ENCODE measurements at regions of chr22 and their contacts with region 1.

Region 1: DNA sequence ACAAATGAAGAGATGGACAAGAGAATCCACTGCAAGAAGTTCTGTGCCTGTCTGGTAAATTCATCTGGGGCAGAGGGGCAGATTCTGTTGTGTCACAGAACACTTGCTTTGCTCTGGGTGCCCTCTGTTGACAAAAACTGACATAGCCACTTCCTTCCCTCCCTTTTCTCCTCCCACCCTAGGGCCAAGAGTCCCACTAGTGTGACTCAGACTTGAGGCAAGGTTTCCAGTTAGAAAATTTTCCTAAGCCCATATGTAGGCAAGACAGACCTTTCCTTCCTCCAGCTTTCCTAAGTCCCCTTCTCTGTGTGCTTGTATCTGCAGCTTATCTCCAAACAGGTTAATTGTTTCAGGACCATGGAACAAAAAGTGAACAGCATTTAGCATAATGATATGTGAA is 106.8 kb downstream of the RBFOX2 start:
- DNase-seq: peak in 4 of 10 donors; percentile 23 to 49 (median 40)
- H3K4me3 ChIP-seq: no peak overlapping the region
- H3K27ac ChIP-seq: peak overlapping the region in 7 of 59 donors; percentile 5 to 31 (median 19)
- H3K27me3 ChIP-seq: no peaks in the 10 kb centered on the region
- CTCF ChIP-seq: peak in 54 of 56 donors; percentile 32 to 80 (median 62)

Region 2: GRCh38 chr22:35430897-35431322 is 490.9 kb before region 1 on chr22:
- intact Hi-C with region 1: loop called in 1 of 2 experiments (anchors 10 kb)
- DNase-seq: peak; percentile 74 to 91 (median 82)
- H3K4me3 ChIP-seq: no peak overlapping the region
- H3K27ac ChIP-seq: peak overlapping the region in 21 of 59 donors; percentile 4 to 57 (median 33)
- H3K27me3 ChIP-seq: no peaks in the 10 kb centered on the region
- CTCF ChIP-seq: peak; percentile 80 to 98 (median 96)

Region 3: DNA sequence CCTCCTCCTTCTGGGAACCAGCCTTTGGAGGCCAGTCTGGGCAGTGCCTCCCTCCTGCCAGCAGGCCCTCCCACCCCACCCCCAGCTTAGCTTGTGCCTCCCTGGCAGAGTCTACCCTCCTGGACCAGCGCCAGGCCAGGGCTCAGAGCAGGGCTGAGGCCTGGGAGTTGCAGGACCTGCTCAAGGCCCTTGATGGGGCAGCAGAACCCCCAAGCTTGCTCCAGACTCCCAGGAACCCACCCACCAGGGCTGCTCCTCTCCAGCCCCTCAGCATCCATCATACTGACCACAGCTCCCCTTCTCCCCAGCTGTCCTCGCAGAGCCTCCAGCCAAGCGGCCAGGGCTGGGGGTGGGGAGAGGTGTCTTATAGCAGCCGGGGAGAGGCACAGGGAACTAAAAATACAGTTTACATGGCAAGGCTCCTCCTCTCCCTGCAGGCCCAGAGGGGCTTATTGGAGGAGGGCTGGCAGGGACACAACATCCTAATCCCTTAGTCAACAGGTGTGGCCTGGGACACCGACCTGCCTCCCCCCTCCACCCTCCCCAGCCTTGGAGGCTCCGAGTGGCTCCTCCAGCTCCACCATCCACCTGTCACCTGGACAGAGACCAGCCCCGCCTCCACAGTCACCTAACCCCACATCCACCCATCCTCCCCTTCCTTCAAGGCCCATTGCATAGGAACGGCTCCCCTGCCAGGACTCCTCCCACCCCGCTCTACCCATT is 299.4 kb before region 1 on chr22:
- intact Hi-C with region 1: loop called (anchors 5 to 10 kb)
- DNase-seq: peak in 1 of 10 donors; percentile 13
- H3K4me3 ChIP-seq: no peak overlapping the region
- H3K27ac ChIP-seq: peak overlapping the region in 1 of 59 donors; percentile 27
- H3K27me3 ChIP-seq: peaks cover 0 to 6% (median 0%) of the 10 kb centered on the region in 45 donors
- CTCF ChIP-seq: no peak

Region 4: DNA sequence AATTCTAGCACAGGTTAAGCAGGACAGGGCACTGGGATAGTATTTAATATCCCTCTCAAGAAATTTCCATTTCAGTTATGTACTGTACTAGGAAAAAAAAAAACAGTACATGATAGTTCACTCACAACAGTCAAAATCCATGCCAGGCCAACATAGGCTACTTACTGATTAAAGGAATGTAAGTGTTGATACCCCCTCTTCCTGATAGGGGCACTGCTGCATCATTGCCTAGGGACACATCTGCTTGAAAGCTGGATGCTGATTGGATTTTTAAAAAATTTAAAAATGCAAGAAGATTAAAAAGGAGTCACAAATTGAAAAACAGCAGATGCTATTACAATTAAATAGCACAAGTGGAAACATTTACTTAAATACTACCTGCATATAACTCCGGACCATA is 160.7 kb before region 1 on chr22:
- intact Hi-C with region 1: loop called in 1 of 2 experiments (anchors 5 kb)
- DNase-seq: no peak
- H3K4me3 ChIP-seq: no peak overlapping the region
- H3K27ac ChIP-seq: no peak overlapping the region
- H3K27me3 ChIP-seq: no peaks in the 10 kb centered on the region
- CTCF ChIP-seq: peak in 45 of 56 donors; percentile 18 to 65 (median 37)

Region 5: DNA sequence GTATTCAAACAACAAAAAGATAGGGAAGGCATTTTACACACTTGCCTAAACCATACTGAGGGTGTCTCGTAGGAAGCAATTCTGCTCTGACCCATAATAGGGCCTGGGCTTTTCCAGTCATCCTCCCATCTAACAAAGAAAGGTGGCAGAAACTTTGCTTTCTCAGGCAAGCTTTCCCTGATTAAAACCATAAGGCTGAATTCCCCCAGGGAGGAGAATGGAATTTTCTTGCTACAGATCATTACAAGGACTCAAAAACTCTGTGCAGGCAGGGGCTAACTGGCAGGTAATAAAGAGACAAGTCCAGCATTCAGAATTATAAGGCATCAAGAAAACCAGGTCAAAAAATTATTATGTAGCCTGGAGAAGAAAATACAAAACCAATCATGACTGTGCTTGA is 16.4 kb after region 1 on chr22:
- intact Hi-C with region 1: no loop called
- DNase-seq: no peak
- H3K4me3 ChIP-seq: no peak overlapping the region
- H3K27ac ChIP-seq: no peak overlapping the region
- H3K27me3 ChIP-seq: no peaks in the 10 kb centered on the region
- CTCF ChIP-seq: no peak

Region 6: DNA sequence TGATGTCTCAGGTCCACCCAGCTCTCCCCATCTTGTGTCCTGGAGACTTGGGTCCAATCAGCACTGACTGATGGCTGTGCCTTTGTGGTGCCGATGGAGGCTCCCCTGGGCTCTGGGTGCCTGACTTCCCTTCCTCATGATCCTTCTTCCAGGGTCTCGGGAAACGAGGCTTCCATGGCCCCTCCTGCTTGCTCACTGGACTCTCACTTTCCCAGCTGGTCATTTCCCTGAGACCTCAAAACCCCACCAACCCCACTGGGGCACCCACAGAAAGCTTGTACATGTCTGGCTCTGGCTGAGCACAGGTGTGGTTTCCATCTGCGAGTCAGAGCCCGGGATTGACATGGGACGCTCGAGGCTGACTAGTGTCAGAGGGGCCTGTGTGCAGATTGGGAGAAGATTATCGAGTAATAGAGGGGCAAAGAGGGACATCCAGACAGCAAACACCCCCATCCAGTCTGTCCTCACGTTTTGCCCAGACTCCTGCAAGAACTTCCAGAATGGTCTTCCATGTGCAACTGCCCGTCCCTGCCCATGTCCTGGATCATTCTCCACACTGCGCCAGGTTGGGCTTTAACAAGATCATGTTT is 346.2 kb after region 1 on chr22:
- intact Hi-C with region 1: no loop called
- DNase-seq: no peak
- H3K4me3 ChIP-seq: no peak overlapping the region
- H3K27ac ChIP-seq: no peak overlapping the region
- H3K27me3 ChIP-seq: no peaks in the 10 kb centered on the region
- CTCF ChIP-seq: no peak